ENCODE measurements at regions of chr6 and their contacts with region 1.

Region 1: DNA sequence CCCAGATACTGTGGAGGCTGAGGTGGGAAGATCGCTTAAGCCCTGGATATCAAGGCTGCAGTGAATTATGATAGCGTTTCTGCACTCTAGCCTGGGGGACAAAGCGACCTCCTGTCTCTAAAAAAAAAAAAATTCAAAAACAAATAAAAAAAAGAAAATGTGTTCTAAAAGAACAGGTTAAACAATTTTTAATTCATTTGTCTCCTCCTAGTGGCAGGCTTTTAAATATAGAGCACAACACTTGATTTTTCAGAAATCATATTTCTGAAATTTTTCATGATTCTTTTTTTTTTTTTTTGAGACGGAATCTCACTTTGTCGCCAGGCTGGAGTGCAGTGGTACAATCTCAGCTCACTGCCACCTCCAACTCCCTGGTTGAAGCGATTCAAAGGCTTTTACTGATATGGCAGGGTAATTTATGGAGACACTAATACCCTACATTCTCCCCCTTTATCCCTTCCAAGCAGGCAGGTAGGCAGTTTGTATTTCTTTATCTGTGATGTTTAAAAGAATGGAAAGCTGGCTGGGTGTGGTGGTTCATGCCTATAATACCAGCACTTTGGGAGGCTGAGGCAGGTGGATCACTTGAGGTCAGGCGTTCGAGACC is 8.7 kb upstream of the GTF3C6 start:
- DNase-seq: no peak
- ATAC-seq: peak in 3 of 4 donors; percentile 48 to 54 (median 53)
- H3K4me3 ChIP-seq: no peak overlapping the region
- H3K27ac ChIP-seq: no peak overlapping the region
- H3K4me1 ChIP-seq: no peaks in the 10 kb centered on the region
- H3K27me3 ChIP-seq: no peaks in the 10 kb centered on the region
- CTCF ChIP-seq: peak in 3 of 4 donors; percentile 29 to 52 (median 30)

Region 2: GRCh38 chr6:110688661-110689268 is 261.0 kb before region 1 on chr6:
- intact Hi-C with region 1: loop called in 2 of 3 experiments (anchors 5 to 10 kb)
- DNase-seq: no peak
- ATAC-seq: peak in 1 of 4 donors; percentile 19
- H3K4me3 ChIP-seq: no peak overlapping the region
- H3K27ac ChIP-seq: no peak overlapping the region
- H3K4me1 ChIP-seq: no peaks in the 10 kb centered on the region
- H3K27me3 ChIP-seq: no peaks in the 10 kb centered on the region
- CTCF ChIP-seq: no peak

Region 3: GRCh38 chr6:111030008-111031007 is 80.5 kb after region 1 on chr6:
- intact Hi-C with region 1: no loop called
- DNase-seq: no peak
- ATAC-seq: peak in 3 of 4 donors; percentile 56 to 75 (median 63)
- H3K4me3 ChIP-seq: no peak overlapping the region
- H3K27ac ChIP-seq: no peak overlapping the region
- H3K4me1 ChIP-seq: peaks cover 0 to 6% (median 5%) of the 10 kb centered on the region in 3 donors
- H3K27me3 ChIP-seq: no peaks in the 10 kb centered on the region
- CTCF ChIP-seq: no peak